PC-9 (cell line): ENCODE measurements at regions of chr17 and their contacts with region 1.

Region 1: GRCh38 chr17:62615503-62615902 is 12.0 kb upstream of the MRC2 start:
- DNase-seq: no peak
- H3K4me3 ChIP-seq: no peak overlapping the region
- H3K27ac ChIP-seq: no peak overlapping the region
- H3K4me1 ChIP-seq: no peaks in the 10 kb centered on the region
- H3K27me3 ChIP-seq: no peaks in the 10 kb centered on the region
- CTCF ChIP-seq: no peak

Region 2: DNA sequence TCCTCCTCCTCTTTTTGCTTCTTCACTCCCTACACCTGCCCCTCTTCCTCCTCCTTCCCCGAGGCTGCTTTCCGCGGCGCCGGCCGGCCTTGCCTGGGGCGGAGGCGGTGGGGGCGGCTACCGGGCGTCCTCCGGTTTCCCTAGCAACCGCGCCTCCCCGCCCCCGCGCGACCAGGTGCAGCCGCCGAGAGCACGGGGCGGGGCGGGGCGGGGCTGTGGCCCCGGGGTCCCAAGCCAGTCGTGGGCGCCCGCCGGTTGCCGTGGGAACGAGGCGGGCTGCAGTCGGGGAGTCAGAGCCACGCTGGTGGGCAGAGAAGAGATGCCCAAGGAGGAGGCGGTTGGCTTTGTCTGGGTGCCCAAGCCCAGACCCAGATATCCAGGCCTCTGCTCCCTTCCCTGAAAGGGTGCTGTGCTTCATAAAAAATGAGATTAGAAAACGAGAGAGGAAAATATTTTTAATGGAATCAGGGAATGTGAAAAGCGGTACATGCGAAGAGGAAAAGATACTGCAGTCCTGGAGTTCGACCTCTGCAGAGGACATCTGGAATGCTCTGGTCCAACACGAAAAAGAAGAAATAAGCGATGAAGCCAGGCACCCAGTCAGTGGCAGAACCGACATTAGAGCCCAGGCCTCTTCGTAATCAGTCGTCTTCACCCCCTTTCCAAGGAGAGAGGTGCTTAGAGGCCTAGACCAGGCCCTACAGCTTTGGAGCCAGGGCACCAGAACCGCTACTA is 192.9 kb after region 1 on chr17 and contains the start of gene MARCHF10:
- CTCF ChIA-PET with region 1: no interaction called
- POLR2A ChIA-PET with region 1: no interaction called
- intact Hi-C with region 1: no loop called
- DNase-seq: peak; percentile 70 to 93
- H3K4me3 ChIP-seq: peak within 1 kb of the TSS; percentile 57
- H3K27ac ChIP-seq: peak within 1 kb of the TSS; percentile 98
- H3K4me1 ChIP-seq: peaks cover 51% of the 10 kb centered on the region
- H3K27me3 ChIP-seq: no peaks in the 10 kb centered on the region
- CTCF ChIP-seq: no peak
- total RNA-seq, gene MARCHF10: 8.0 and 9.6 TPM in 2 replicates

Region 3: GRCh38 chr17:62827746-62828616 is 212.5 kb after region 1 on chr17:
- CTCF ChIA-PET with region 1: no interaction called
- POLR2A ChIA-PET with region 1: no interaction called
- intact Hi-C with region 1: no loop called
- DNase-seq: no peak
- H3K4me3 ChIP-seq: no peak overlapping the region
- H3K27ac ChIP-seq: peak overlapping the region; percentile 36
- H3K4me1 ChIP-seq: peaks cover 52% of the 10 kb centered on the region
- H3K27me3 ChIP-seq: no peaks in the 10 kb centered on the region
- CTCF ChIP-seq: no peak

Region 4: GRCh38 chr17:63587770-63588169 is 972.3 kb after region 1 on chr17:
- CTCF ChIA-PET with region 1: no interaction called
- POLR2A ChIA-PET with region 1: interaction called, 33 read pairs
- intact Hi-C with region 1: no loop called
- DNase-seq: no peak
- H3K4me3 ChIP-seq: no peak overlapping the region
- H3K27ac ChIP-seq: no peak overlapping the region
- H3K4me1 ChIP-seq: no peaks in the 10 kb centered on the region
- H3K27me3 ChIP-seq: no peaks in the 10 kb centered on the region
- CTCF ChIP-seq: no peak